OCI-LY7 (cell line): ENCODE measurements at regions of chr6 and their contacts with region 1.

Region 1: DNA sequence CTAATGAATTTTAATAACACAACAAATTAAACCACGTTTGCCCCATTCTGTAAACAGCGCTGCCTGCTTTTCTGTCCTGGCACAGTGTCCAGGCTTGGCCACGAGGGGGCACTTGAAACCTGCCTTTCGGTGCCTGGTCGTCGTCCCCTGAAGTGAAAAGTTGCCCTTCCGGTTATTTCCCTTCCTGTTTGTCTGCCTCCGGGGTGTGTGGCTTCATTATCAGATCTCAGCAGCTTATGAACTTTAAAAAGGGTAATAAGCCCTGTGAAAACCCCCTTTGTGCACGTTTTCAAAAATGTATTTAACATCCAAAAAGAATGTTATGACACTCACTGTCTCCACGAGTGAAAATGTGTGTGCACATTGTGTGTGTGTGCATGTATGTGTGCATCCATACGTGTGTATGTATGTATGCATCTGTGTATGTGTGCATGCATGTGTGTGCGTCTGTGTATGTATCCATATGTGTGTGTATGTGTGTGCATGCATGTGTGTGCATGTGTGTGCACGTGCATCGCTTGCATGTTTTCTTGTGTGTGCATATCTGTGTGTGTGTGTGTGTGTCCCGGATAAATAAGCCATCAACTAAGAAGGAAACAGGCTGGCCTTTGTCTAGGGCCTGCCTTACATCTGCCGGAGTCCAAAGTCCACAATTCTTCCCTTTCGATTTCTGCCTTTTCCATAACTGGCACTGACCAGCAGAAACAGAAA is 358.4 kb downstream of the THBS2 start:
- DNase-seq: peak; percentile 79
- H3K4me3 ChIP-seq: peak overlapping the region; percentile 15
- H3K27ac ChIP-seq: no peak overlapping the region
- H3K4me1 ChIP-seq: peaks cover 4% of the 10 kb centered on the region
- CTCF ChIP-seq: peak; percentile 95

Region 2: GRCh38 chr6:168871642-168872315 is 23.5 kb before region 1 on chr6:
- CTCF ChIA-PET with region 1: no interaction called
- POLR2A ChIA-PET with region 1: no interaction called
- intact Hi-C with region 1: no loop called
- DNase-seq: no peak
- H3K4me3 ChIP-seq: no peak overlapping the region
- H3K27ac ChIP-seq: no peak overlapping the region
- H3K4me1 ChIP-seq: no peaks in the 10 kb centered on the region
- CTCF ChIP-seq: no peak

Region 3: DNA sequence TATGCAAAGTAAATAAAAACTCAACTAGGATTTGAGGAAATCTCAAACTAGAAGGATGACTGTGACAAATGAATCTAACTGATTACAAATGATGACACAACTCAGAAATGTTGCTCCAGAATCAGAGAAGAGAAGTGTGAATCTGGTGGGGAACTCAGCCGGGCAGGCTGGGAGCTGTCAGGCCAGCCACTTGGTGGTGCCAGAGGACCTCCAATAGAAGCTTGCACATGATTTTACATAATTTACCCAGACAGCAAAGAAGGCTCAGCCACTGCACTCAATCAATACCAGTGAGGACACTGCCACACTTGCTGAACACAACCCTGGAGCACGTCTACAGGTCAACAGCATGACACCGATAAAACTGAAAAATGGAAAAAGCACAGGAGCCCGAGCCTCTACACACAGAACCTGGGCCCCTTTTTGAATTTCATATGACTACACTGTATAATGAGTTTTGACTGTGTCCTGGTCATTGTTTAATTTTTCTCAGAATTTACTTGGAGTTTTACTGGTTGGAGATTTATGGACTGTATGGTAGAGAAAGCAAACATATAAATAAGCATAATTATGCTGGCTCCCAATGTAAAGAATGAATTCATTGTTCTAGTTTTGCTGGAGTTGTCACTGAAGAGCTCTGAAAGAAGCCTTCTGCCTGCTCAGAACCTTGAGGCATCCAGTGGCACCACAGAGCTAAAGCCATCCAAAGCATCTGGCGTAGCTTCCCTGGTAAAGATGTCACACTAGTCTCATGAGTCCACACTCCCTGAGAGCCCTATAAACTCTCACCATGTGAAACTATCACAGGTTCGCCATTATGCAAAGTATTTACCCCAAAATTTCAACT is 61.9 kb after region 1 on chr6:
- CTCF ChIA-PET with region 1: no interaction called
- POLR2A ChIA-PET with region 1: no interaction called
- intact Hi-C with region 1: loop called (anchors 2 kb)
- DNase-seq: peak; percentile 49
- H3K4me3 ChIP-seq: no peak overlapping the region
- H3K27ac ChIP-seq: no peak overlapping the region
- H3K4me1 ChIP-seq: no peaks in the 10 kb centered on the region
- CTCF ChIP-seq: peak; percentile 83

Region 4: GRCh38 chr6:170516783-170517616 is 1621.7 kb after region 1 on chr6:
- CTCF ChIA-PET with region 1: no interaction called
- POLR2A ChIA-PET with region 1: no interaction called
- intact Hi-C with region 1: loop called (anchors 5 kb)
- DNase-seq: peak; percentile 74
- H3K4me3 ChIP-seq: no peak overlapping the region
- H3K27ac ChIP-seq: no peak overlapping the region
- H3K4me1 ChIP-seq: no peaks in the 10 kb centered on the region
- CTCF ChIP-seq: peak; percentile 88

Region 5: GRCh38 chr6:170529839-170530469 is 1634.7 kb after region 1 on chr6:
- CTCF ChIA-PET with region 1: no interaction called
- POLR2A ChIA-PET with region 1: interaction called, 4 read pairs
- intact Hi-C with region 1: loop called (anchors 5 kb)
- DNase-seq: peak; percentile 69
- H3K4me3 ChIP-seq: no peak overlapping the region
- H3K27ac ChIP-seq: no peak overlapping the region
- H3K4me1 ChIP-seq: no peaks in the 10 kb centered on the region
- CTCF ChIP-seq: peak; percentile 94